ENCODE measurements at regions of chr3 and their contacts with region 1.

Region 1: GRCh38 chr3:46953234-46954010 is 23.1 kb downstream of the CCDC12 start:
- DNase-seq: peak; percentile 60 to 78 (median 60)
- H3K4me3 ChIP-seq: peak overlapping the region in 1 of 3 experiments; percentile 56
- H3K4me3 Mint-ChIP-seq: peak overlapping the region; percentile 57 to 79
- H3K27ac ChIP-seq: peak overlapping the region; percentile 57 to 78
- H3K27ac Mint-ChIP-seq: peak overlapping the region; percentile 87 to 95 (median 93)
- H3K4me1 ChIP-seq: peaks cover 89 to 93% of the 10 kb centered on the region in 2 donors
- H3K4me1 Mint-ChIP-seq: peaks cover 92% of the 10 kb centered on the region
- H3K27me3 ChIP-seq: no peaks in the 10 kb centered on the region
- H3K27me3 Mint-ChIP-seq: no peaks in the 10 kb centered on the region
- CTCF ChIP-seq: no peak

Region 2: GRCh38 chr3:46406788-46407611 is 546.4 kb before region 1 on chr3 and contains the starts of genes CCR5AS and CCRL2:
- intact Hi-C with region 1: loop called in 1 of 2 experiments (anchors 10 kb)
- DNase-seq: peak; percentile 91 to 98 (median 94)
- H3K4me3 ChIP-seq: peak within 1 kb of the TSS; percentile 34 to 74 (median 55)
- H3K4me3 Mint-ChIP-seq: peak within 1 kb of the TSS; percentile 81 to 95
- H3K27ac ChIP-seq: peak within 1 kb of the TSS; percentile 97 to 100
- H3K27ac Mint-ChIP-seq: peak within 1 kb of the TSS; percentile 100
- H3K4me1 ChIP-seq: peaks cover 43 to 47% of the 10 kb centered on the region in 2 donors
- H3K4me1 Mint-ChIP-seq: peaks cover 58% of the 10 kb centered on the region
- H3K27me3 ChIP-seq: no peaks in the 10 kb centered on the region
- H3K27me3 Mint-ChIP-seq: peaks cover 0 to 7% (median 0%) of the 10 kb centered on the region in 3 donors
- CTCF ChIP-seq: no peak
- polyA plus RNA-seq, gene CCRL2: 10.2 to 15.3 (median 11.7) TPM

Region 3: DNA sequence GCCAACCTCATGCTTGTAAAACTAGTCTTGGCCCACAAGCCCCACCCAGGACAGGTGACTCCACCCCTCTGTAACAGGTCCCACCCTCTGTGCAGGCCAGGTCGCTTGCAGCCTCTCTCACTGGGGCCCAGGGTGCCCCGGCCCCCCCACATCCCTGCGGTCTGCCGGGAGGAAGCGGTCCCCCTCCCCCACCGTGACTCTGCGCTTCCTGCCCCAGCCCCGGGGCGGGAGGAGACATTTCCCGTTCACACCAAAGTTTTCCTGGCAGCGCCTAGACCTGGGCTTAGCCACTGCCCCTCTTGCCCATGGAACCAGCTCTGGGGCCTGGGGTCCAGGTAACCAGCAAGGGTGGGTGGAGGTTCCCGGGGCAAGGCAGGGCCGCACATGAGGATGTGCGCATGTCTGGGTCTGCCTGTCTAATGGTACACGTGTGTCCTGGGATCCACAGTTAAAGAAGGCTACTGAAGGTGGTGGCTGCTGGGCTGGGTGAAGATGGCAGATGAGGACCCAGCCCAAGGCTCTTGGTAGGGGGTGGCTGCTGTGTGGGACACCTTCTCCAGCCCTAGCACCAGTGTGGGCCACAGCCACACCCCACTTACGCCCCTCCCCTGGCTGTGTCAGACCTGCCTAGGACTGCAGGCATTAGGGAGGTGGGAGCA is 34.5 kb after region 1 on chr3:
- intact Hi-C with region 1: loop called in 1 of 2 experiments (anchors 5 kb)
- DNase-seq: peak; percentile 76 to 81 (median 79)
- H3K4me3 ChIP-seq: peak overlapping the region; percentile 47 to 79 (median 55)
- H3K4me3 Mint-ChIP-seq: peak overlapping the region; percentile 80 to 90
- H3K27ac ChIP-seq: peak overlapping the region; percentile 89 to 92
- H3K27ac Mint-ChIP-seq: peak overlapping the region; percentile 93 to 99 (median 96)
- H3K4me1 ChIP-seq: peaks cover 86 to 96% of the 10 kb centered on the region in 2 donors
- H3K4me1 Mint-ChIP-seq: peaks cover 87% of the 10 kb centered on the region
- H3K27me3 ChIP-seq: no peaks in the 10 kb centered on the region
- H3K27me3 Mint-ChIP-seq: peaks cover 0 to 3% (median 2%) of the 10 kb centered on the region in 3 donors
- CTCF ChIP-seq: no peak

Region 4: GRCh38 chr3:47601281-47601680 is 647.9 kb after region 1 on chr3:
- intact Hi-C with region 1: no loop called
- DNase-seq: no peak
- H3K4me3 ChIP-seq: no peak overlapping the region
- H3K4me3 Mint-ChIP-seq: no peak overlapping the region
- H3K27ac ChIP-seq: no peak overlapping the region
- H3K27ac Mint-ChIP-seq: peak overlapping the region in 1 of 7 donors; percentile 37
- H3K4me1 ChIP-seq: no peaks in the 10 kb centered on the region
- H3K4me1 Mint-ChIP-seq: no peaks in the 10 kb centered on the region
- H3K27me3 ChIP-seq: no peaks in the 10 kb centered on the region
- H3K27me3 Mint-ChIP-seq: no peaks in the 10 kb centered on the region
- CTCF ChIP-seq: no peak

Measured in CD14-positive monocyte (primary cell).